Heart left ventricle (tissue), 16 donors: ENCODE measurements at regions of chr15 and their contacts with region 1.

Region 1: GRCh38 chr15:44033894-44034293 is 161.2 kb downstream of the FRMD5 start:
- DNase-seq: no peak
- ATAC-seq: no peak
- H3K4me3 ChIP-seq: no peak overlapping the region
- H3K27ac ChIP-seq: no peak overlapping the region
- H3K4me1 ChIP-seq: peaks cover 0 to 36% (median 3%) of the 10 kb centered on the region in 12 donors
- H3K27me3 ChIP-seq: no peaks in the 10 kb centered on the region
- CTCF ChIP-seq: no peak
- POLR2A ChIP-seq: no peak

Region 2: GRCh38 chr15:43920815-43921214 is 113.1 kb before region 1 on chr15:
- intact Hi-C with region 1: loop called in 3 of 10 experiments (anchors 10 kb)
- DNase-seq: no peak
- ATAC-seq: peak in 1 of 4 donors; percentile 21
- H3K4me3 ChIP-seq: no peak overlapping the region
- H3K27ac ChIP-seq: no peak overlapping the region
- H3K4me1 ChIP-seq: peaks cover 0 to 31% (median 5%) of the 10 kb centered on the region in 12 donors
- H3K27me3 ChIP-seq: no peaks in the 10 kb centered on the region
- CTCF ChIP-seq: no peak
- POLR2A ChIP-seq: no peak

Region 3: GRCh38 chr15:43977072-43977884 is 56.6 kb before region 1 on chr15:
- intact Hi-C with region 1: loop called in 1 of 10 experiments (anchors 10 kb)
- DNase-seq: no peak
- ATAC-seq: no peak
- H3K4me3 ChIP-seq: no peak overlapping the region
- H3K27ac ChIP-seq: no peak overlapping the region
- H3K4me1 ChIP-seq: peaks cover 0 to 15% (median 0%) of the 10 kb centered on the region in 12 donors
- H3K27me3 ChIP-seq: peaks cover 0 to 4% (median 0%) of the 10 kb centered on the region in 9 donors
- CTCF ChIP-seq: no peak
- POLR2A ChIP-seq: no peak

Region 4: GRCh38 chr15:44058126-44058525 is 24.2 kb after region 1 on chr15:
- intact Hi-C with region 1: no loop called
- DNase-seq: no peak
- ATAC-seq: no peak
- H3K4me3 ChIP-seq: no peak overlapping the region
- H3K27ac ChIP-seq: no peak overlapping the region
- H3K4me1 ChIP-seq: peaks cover 0 to 5% (median 0%) of the 10 kb centered on the region in 12 donors
- H3K27me3 ChIP-seq: peaks cover 0 to 2% (median 0%) of the 10 kb centered on the region in 9 donors
- CTCF ChIP-seq: no peak
- POLR2A ChIP-seq: no peak

Region 5: DNA sequence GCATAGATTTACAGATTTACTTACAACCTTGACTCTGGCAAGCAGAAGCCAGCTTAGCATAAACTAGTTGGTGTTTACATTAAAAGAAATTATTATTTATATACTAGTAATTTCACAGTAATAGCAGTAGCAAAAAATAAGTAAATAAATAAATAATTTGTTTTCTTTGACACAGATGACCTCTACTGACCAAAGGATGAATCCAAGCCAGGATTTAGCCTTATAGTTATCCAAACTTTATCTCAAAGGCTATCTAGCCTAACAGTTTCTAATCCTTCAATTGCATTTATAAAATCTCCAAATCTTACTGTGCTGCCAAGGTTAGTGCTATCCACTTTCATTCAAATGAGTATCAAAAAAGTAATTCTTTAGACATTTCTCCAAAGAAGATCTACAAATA is 96.9 kb after region 1 on chr15:
- intact Hi-C with region 1: no loop called
- DNase-seq: no peak
- ATAC-seq: no peak
- H3K4me3 ChIP-seq: no peak overlapping the region
- H3K27ac ChIP-seq: no peak overlapping the region
- H3K4me1 ChIP-seq: no peaks in the 10 kb centered on the region
- H3K27me3 ChIP-seq: peaks cover 0 to 13% (median 0%) of the 10 kb centered on the region in 9 donors
- CTCF ChIP-seq: peak in 5 of 12 donors; percentile 13 to 21 (median 19)
- POLR2A ChIP-seq: no peak